ENCODE measurements at regions of chr3 and their contacts with region 1.

Region 1: DNA sequence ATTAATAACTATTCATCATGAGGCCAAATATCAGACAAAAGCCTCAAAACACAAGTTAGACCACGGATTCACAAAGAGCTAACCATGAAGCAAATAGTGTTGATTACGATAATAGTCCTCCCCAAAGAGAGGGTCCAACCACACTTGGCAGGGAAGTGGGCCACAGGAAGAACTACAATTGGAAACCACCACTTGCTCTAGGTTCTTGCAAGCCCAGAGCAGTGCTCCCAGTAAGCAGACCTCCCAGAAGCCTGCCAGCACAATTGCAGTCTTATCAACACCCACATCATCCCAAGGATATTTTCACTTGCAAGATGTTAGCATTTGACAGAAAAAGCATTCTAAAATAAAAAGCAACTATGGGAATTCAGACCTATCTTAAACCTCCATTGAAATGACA is 11.3 kb downstream of the SETD2 start:
- DNase-seq: no peak
- ATAC-seq: no peak
- H3K4me3 ChIP-seq: no peak overlapping the region
- H3K27ac ChIP-seq: no peak overlapping the region
- H3K4me1 ChIP-seq: no peaks in the 10 kb centered on the region
- H3K27me3 ChIP-seq: no peaks in the 10 kb centered on the region
- CTCF ChIP-seq: no peak

Region 2: GRCh38 chr3:47117807-47118364 is 34.7 kb before region 1 on chr3:
- CTCF ChIA-PET with region 1: no interaction called
- POLR2A ChIA-PET with region 1: no interaction called
- intact Hi-C with region 1: loop called (anchors 5 kb)
- DNase-seq: no peak
- ATAC-seq: no peak
- H3K4me3 ChIP-seq: no peak overlapping the region
- H3K27ac ChIP-seq: no peak overlapping the region
- H3K4me1 ChIP-seq: peaks cover 18% of the 10 kb centered on the region
- H3K27me3 ChIP-seq: no peaks in the 10 kb centered on the region
- CTCF ChIP-seq: no peak

Region 3: GRCh38 chr3:47210863-47211405 is 58.4 kb after region 1 on chr3:
- CTCF ChIA-PET with region 1: no interaction called
- POLR2A ChIA-PET with region 1: interaction called, 14 read pairs
- intact Hi-C with region 1: no loop called
- DNase-seq: no peak
- ATAC-seq: no peak
- H3K4me3 ChIP-seq: no peak overlapping the region
- H3K27ac ChIP-seq: no peak overlapping the region
- H3K4me1 ChIP-seq: no peaks in the 10 kb centered on the region
- H3K27me3 ChIP-seq: no peaks in the 10 kb centered on the region
- CTCF ChIP-seq: no peak

Measured in PC-3 (cell line).